ENCODE measurements at regions of chr15 and their contacts with region 1.

Region 1: DNA sequence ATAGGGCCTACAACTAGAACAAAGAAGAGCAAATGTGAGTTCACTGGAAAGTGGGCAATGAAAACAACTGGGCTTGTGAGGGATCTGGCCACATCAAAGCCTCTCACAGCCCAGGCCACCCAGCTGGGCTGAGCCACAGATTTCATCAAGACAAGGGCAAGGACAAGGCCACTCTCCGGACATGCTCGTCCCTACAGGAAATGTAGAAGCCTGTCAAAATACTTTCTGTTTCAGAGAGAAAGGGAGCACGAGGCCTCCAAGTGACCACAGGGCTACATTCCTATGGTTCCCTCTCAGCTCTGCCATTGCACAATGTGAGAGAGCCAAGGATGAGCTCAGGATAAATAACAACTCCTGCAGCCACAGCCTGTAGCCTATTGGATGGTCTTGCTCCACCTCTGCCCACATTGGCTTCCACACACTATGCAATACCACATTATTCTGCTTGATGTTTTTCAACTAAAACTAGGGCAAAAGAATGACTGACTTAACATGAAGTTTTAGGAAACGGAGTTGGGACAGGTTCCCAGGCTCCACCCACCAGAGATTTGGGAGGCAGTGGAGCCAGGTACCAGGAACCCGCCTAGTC is 12.1 kb downstream of the TBC1D2B start:
- DNase-seq: no peak
- ATAC-seq: peak; percentile 14
- H3K4me3 ChIP-seq: peak overlapping the region; percentile 69
- H3K27ac ChIP-seq: peak overlapping the region; percentile 89
- H3K4me1 ChIP-seq: peaks cover 70% of the 10 kb centered on the region
- H3K27me3 ChIP-seq: no peaks in the 10 kb centered on the region
- CTCF ChIP-seq: no peak
- EP300 ChIP-seq: no peak
- POLR2A ChIP-seq: no peak
- RAD21 ChIP-seq: no peak

Region 2: DNA sequence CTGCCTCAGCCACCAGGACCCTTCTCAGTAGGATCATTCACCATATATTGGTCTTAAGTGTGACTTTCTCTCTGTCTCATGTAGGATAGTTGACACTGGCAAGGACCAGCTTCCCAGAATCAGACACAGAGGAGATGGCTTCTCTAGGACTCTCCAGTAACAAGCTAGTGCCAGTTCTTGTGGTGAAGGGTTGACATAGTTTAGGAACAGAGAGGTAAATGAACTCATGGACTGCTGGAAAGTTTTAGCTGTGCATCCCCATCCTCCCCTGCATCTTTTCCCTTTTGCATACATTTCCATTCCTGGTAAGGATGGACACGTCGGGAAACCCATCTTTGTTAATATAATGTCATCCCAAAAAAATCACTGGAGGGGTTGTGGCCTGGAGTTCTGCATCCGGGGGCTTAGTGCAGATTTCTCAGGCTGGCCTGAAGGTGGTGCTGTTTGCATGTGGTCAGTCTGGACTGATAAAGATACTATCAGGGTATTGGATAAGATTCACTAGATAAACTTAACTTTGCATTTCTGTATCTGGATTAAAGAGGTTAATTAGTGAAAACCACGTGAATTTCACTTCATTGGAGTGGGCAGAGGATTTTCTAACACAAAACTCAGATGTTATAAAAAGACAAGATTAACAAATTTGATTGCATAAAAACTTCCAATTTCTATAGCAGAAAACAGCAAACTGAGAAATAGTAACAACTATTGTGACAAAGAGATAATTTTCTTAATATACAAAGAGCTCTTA is 98.7 kb before region 1 on chr15:
- CTCF ChIA-PET with region 1: interaction called, 46 read pairs
- POLR2A ChIA-PET with region 1: interaction called, 11 read pairs
- RAD21 ChIA-PET with region 1: interaction called, 8 read pairs
- SMC1A ChIA-PET with region 1: interaction called, 10 read pairs
- in situ Hi-C with region 1: no loop called
- intact Hi-C with region 1: loop called (anchors 5 kb)
- DNase-seq: no peak
- ATAC-seq: peak; percentile 96
- H3K4me3 ChIP-seq: no peak overlapping the region
- H3K27ac ChIP-seq: no peak overlapping the region
- H3K4me1 ChIP-seq: peaks cover 6% of the 10 kb centered on the region; the same call in 1 of the 2 replicates
- H3K27me3 ChIP-seq: no peaks in the 10 kb centered on the region
- CTCF ChIP-seq: peak; percentile 83 to 85 (median 84)
- EP300 ChIP-seq: no peak
- POLR2A ChIP-seq: no peak
- RAD21 ChIP-seq: peak; percentile 86

Region 3: DNA sequence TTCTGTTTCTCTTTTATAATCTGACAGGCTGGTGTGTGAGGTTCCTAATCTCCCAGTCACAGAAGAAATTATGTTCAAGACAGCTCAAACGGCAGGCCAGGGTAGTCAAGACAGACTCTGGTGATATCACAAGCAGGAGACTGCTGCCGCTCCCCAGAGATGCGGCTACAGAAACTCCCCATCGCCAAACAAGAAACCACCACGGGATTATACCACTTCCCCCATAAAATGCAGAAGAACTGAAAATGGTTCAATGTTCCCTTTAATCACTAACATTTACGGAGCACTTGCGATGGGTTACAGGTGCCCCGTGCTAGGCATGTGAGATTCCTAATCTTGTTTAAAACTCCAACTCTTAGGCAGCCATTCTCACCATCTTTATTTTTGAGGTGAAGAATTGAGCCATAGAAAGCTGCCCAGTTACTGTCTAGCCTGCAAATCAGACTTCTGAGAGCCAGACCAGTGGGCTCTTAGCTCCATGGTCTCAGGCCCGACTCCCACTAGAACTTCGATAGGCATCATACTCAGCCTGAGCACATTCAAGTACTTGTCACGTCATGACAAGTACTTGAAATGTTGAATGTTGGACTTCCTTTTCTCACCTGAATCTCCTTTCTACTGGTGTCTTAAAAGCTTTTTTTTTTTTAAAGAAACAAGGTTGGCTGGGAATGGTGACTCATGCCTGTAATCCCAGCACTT is 46.3 kb before region 1 on chr15:
- CTCF ChIA-PET with region 1: interaction called, 27 read pairs
- POLR2A ChIA-PET with region 1: interaction called, 4 read pairs
- RAD21 ChIA-PET with region 1: interaction called, 14 read pairs
- SMC1A ChIA-PET with region 1: interaction called, 35 read pairs
- in situ Hi-C with region 1: no loop called
- intact Hi-C with region 1: no loop called
- DNase-seq: no peak
- ATAC-seq: peak; percentile 97
- H3K4me3 ChIP-seq: no peak overlapping the region
- H3K27ac ChIP-seq: peak overlapping the region; percentile 60
- H3K4me1 ChIP-seq: peaks cover 7% of the 10 kb centered on the region
- H3K27me3 ChIP-seq: no peaks in the 10 kb centered on the region
- CTCF ChIP-seq: no peak
- EP300 ChIP-seq: no peak
- POLR2A ChIP-seq: no peak
- RAD21 ChIP-seq: no peak

Region 4: DNA sequence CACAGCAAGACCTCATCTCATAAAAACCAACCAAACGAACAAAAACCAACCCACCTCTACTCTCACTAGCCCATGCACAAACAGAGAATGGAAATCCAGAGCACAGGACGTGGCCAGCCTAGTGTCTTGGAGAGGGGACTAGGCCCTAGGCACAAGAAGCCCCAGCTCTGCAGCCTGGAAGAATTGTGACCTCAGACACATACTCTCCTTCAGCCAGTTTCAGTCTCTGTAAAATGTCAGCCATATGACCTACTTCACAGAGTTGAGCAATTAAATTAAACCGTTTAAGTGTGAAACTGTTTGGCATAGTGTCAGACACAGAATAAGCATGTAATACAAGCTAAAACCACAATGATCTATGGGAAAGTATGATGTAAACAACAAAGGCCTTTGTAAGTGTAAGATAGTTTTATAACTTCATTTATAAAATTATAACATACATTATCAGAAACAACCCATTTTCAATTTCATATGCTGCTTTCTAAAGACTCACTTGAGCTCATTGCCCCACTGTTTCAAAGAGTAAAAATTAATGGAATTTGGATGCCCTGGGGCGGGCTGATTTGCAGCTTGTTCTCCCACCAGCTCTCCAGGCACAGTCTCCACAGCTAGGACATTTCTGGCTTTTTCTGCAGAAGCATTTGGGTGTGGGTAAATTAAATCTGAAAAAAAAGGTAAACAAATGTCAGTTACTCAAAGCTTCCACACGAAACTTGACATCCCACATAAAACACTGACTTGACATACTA is 20.8 kb before region 1 on chr15:
- CTCF ChIA-PET with region 1: interaction called, 158 read pairs
- POLR2A ChIA-PET with region 1: interaction called, 79 read pairs
- RAD21 ChIA-PET with region 1: interaction called, 170 read pairs
- SMC1A ChIA-PET with region 1: interaction called, 305 read pairs
- in situ Hi-C with region 1: no loop called
- intact Hi-C with region 1: no loop called
- DNase-seq: no peak
- ATAC-seq: peak; percentile 78
- H3K4me3 ChIP-seq: no peak overlapping the region
- H3K27ac ChIP-seq: no peak overlapping the region
- H3K4me1 ChIP-seq: peaks cover 32% of the 10 kb centered on the region
- H3K27me3 ChIP-seq: no peaks in the 10 kb centered on the region
- CTCF ChIP-seq: no peak
- EP300 ChIP-seq: peak; percentile 27 to 65; a peak in 1 of 4 replicates
- POLR2A ChIP-seq: no peak
- RAD21 ChIP-seq: no peak

Region 5: DNA sequence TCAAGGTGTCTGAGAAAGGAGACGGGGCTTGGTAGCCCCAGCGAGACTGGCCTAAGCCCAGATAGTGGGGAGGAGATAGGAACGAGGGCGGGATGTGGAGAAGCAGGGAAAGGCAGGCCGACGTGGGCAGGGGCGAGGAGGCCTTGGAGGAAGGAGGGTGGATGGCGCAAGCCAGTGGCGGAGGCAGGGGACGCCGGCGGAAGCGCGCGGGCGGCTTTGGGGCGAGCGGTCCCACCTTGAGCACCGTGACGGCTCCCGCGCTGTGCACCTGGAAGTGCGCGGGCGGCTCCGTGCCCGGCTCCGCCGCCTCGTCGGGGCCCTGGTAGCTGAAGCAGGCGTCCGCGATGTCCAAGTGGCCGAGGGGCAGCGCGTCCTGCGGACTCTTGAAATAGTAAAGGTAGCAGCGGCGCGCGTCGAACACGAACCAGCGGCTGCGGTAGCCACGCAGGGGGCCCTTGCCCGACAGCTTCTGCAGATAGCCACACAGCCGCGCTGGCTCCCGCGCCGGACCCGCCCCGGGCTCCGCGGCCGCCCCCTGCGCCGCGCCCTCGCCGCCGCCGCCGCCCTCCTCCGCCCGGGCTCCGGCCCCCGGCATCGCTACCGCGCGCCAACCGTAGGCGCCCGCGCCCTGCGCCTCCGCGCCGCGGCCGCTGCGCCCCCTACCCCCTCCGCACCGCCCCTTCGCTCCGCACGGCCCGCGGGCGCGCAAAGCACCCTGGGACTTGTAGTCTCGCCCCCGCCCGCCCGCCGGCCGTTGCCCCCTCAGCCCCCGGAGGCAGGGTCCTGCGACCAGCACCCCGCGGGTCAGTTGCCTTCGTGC is 11.9 kb after region 1 on chr15 and contains the start of gene TBC1D2B:
- CTCF ChIA-PET with region 1: interaction called, 87 read pairs
- POLR2A ChIA-PET with region 1: interaction called, 9 read pairs
- RAD21 ChIA-PET with region 1: interaction called, 8 read pairs
- SMC1A ChIA-PET with region 1: interaction called, 77 read pairs
- in situ Hi-C with region 1: no loop called
- intact Hi-C with region 1: no loop called
- DNase-seq: no peak
- ATAC-seq: peak; percentile 81
- H3K4me3 ChIP-seq: peak within 1 kb of the TSS; percentile 99
- H3K27ac ChIP-seq: peak within 1 kb of the TSS; percentile 62
- H3K4me1 ChIP-seq: peaks cover 10% of the 10 kb centered on the region
- H3K27me3 ChIP-seq: no peaks in the 10 kb centered on the region
- CTCF ChIP-seq: no peak; a peak in 1 of 6 replicates
- EP300 ChIP-seq: no peak
- POLR2A ChIP-seq: no peak
- RAD21 ChIP-seq: no peak
- polyA plus RNA-seq, gene TBC1D2B: 1.3 to 1.4 TPM

Region 6: GRCh38 chr15:78087951-78088772 is 22.8 kb after region 1 on chr15:
- CTCF ChIA-PET with region 1: interaction called, 16 read pairs
- POLR2A ChIA-PET with region 1: interaction called, 6 read pairs
- RAD21 ChIA-PET with region 1: interaction called, 4 read pairs
- SMC1A ChIA-PET with region 1: interaction called, 6 read pairs
- in situ Hi-C with region 1: no loop called
- intact Hi-C with region 1: no loop called
- DNase-seq: no peak
- ATAC-seq: peak; percentile 93
- H3K4me3 ChIP-seq: no peak overlapping the region
- H3K27ac ChIP-seq: peak overlapping the region; percentile 26; the same call in 1 of the 2 replicates
- H3K4me1 ChIP-seq: peaks cover 16% of the 10 kb centered on the region
- H3K27me3 ChIP-seq: no peaks in the 10 kb centered on the region
- CTCF ChIP-seq: no peak
- EP300 ChIP-seq: no peak
- POLR2A ChIP-seq: no peak
- RAD21 ChIP-seq: no peak

Region 7: GRCh38 chr15:78225783-78226541 is 160.6 kb after region 1 on chr15:
- CTCF ChIA-PET with region 1: no interaction called
- POLR2A ChIA-PET with region 1: no interaction called
- RAD21 ChIA-PET with region 1: no interaction called
- SMC1A ChIA-PET with region 1: no interaction called
- in situ Hi-C with region 1: no loop called
- intact Hi-C with region 1: no loop called
- DNase-seq: peak; percentile 49
- ATAC-seq: peak; percentile 94
- H3K4me3 ChIP-seq: no peak overlapping the region
- H3K27ac ChIP-seq: peak overlapping the region; percentile 58
- H3K4me1 ChIP-seq: peaks cover 3% of the 10 kb centered on the region; the same call in 1 of the 2 replicates
- H3K27me3 ChIP-seq: no peaks in the 10 kb centered on the region
- CTCF ChIP-seq: no peak
- EP300 ChIP-seq: no peak
- POLR2A ChIP-seq: no peak
- RAD21 ChIP-seq: no peak

Region 8: GRCh38 chr15:78552597-78552996 is 487.2 kb after region 1 on chr15:
- CTCF ChIA-PET with region 1: no interaction called
- POLR2A ChIA-PET with region 1: no interaction called
- RAD21 ChIA-PET with region 1: no interaction called
- SMC1A ChIA-PET with region 1: no interaction called
- in situ Hi-C with region 1: no loop called
- intact Hi-C with region 1: no loop called
- DNase-seq: no peak
- ATAC-seq: no peak; the same call in 2 of the 3 replicates
- H3K4me3 ChIP-seq: no peak overlapping the region
- H3K27ac ChIP-seq: no peak overlapping the region; the same call in 1 of the 2 replicates
- H3K4me1 ChIP-seq: peaks cover 6% of the 10 kb centered on the region
- H3K27me3 ChIP-seq: no peaks in the 10 kb centered on the region
- CTCF ChIP-seq: no peak
- EP300 ChIP-seq: no peak
- POLR2A ChIP-seq: no peak
- RAD21 ChIP-seq: no peak

Measured in GM12878 (cell line).